Activated T-helper 1 cell treated with anti-CD3 and anti-CD28 coated beads, Interleukin-12 subunit alpha, Interleukin-12 subunit beta, Interleukin-2, Interleukin-4 antibody, amounts not matched to agents 30 ng/mL and 10 ng/mL and 1 ng/mL, durations not matched to agents 14 hours and 24 hours and 36 hours (primary cell): ENCODE measurements at regions of chr10 and their contacts with region 1.

Region 1: GRCh38 chr10:96017191-96017687 is 26.1 kb upstream of the CCNJ start:
- DNase-seq: peak; percentile 7
- H3K4me3 Mint-ChIP-seq: no peak overlapping the region
- H3K27ac Mint-ChIP-seq: no peak overlapping the region
- H3K4me1 Mint-ChIP-seq: peaks cover 6% of the 10 kb centered on the region
- H3K27me3 Mint-ChIP-seq: peaks cover 6% of the 10 kb centered on the region

Region 2: GRCh38 chr10:96229568-96230030 is 212.4 kb after region 1 on chr10:
- intact Hi-C with region 1: loop called (anchors 1 kb)
- DNase-seq: peak; percentile 38
- H3K4me3 Mint-ChIP-seq: no peak overlapping the region
- H3K27ac Mint-ChIP-seq: no peak overlapping the region
- H3K4me1 Mint-ChIP-seq: no peaks in the 10 kb centered on the region
- H3K27me3 Mint-ChIP-seq: peaks cover 3% of the 10 kb centered on the region

Region 3: GRCh38 chr10:96292971-96293920 is 276.0 kb after region 1 on chr10:
- intact Hi-C with region 1: loop called (anchors 1 kb)
- DNase-seq: no peak
- H3K4me3 Mint-ChIP-seq: no peak overlapping the region
- H3K27ac Mint-ChIP-seq: no peak overlapping the region
- H3K4me1 Mint-ChIP-seq: peaks cover 14% of the 10 kb centered on the region
- H3K27me3 Mint-ChIP-seq: peaks cover 5% of the 10 kb centered on the region

Region 4: DNA sequence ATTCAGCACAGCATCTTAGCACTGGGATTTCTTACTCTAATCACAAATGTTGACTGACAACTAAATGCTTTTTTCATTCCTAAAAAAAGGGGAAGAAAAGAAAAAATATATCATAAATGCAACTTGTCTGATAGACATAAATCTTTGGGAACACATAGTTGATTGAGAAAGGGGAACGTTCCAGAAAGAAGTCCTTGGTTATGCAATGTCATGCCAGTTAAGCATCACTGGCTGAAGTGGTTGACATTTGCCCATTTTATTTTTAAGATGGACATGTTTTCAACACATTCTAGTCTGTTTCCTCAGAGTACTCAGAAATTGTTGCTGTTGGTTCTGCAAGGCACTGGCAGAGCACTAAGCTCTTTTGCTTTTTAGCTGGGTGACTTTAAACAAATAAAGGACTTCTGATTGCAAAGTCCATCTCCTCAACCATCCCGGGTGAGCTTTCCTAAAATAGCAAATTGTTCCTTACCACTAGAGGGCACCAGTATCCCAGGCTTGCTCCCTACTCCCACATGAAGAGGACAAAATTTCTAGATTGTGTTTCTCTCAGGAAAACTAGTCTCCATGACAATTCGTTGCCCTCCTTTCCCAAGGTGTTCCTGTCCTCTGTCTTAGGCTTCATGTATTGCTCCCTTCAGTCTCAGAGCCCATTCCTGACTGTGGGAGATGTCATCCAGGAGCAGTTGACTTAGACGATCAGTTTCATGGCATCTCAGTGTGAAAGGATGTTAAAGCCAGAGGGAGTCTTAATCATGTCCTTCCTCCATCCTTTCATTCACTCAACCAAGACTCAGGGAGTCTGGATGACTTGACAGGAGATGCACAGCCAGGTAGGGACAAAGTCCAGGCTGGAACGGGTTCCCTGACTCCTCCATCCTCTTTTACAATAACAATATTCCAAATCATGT is 317.6 kb after region 1 on chr10:
- intact Hi-C with region 1: loop called (anchors 1 kb)
- DNase-seq: no peak
- H3K4me3 Mint-ChIP-seq: no peak overlapping the region
- H3K27ac Mint-ChIP-seq: no peak overlapping the region
- H3K4me1 Mint-ChIP-seq: no peaks in the 10 kb centered on the region
- H3K27me3 Mint-ChIP-seq: peaks cover 16% of the 10 kb centered on the region

Region 5: DNA sequence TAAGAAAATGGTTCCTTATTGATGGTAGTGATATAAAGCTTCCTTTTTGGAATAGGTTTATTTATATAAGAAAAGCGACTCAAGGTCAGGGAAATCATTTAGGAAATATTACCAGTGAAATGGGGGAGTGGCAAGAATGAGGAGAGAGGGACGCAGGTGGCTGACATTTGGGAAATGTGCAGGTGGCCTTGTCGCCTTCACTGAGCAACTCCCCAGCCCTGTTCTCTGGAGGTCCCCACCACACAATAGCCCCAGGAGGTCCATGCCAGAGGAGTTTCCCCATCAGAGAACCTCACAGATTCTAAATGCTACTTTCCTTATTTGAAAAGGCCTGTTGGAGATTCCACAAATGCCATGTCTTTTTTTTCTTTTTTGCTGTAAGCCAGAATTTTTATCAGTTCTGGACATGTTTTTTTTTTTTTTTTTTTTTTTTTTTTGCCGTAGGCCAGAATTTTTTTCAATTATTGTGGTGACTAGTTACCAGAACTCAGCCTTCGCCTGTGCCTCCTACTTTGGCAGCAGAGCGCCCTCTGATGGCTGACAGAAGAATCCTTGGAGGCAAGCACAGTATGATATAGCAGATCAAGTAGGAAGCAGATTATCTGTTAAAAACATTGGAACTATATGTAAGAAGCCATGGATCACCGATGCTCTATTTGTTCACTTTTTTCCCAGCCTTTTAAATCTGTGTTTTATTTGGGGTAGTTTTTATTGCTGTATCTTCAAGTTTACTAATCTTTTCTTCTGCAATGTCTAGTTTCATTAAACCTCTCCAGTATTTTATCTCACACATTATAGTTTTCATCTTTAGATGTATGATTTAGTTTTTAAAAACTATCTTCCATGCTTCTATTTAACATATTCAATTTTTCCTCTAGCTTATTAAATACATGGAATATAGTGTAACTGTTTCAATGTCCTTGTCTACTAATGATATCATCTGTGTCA is 323.0 kb after region 1 on chr10:
- intact Hi-C with region 1: loop called (anchors 1 kb)
- DNase-seq: peak; percentile 29
- H3K4me3 Mint-ChIP-seq: no peak overlapping the region
- H3K27ac Mint-ChIP-seq: no peak overlapping the region
- H3K4me1 Mint-ChIP-seq: no peaks in the 10 kb centered on the region
- H3K27me3 Mint-ChIP-seq: peaks cover 6% of the 10 kb centered on the region